Common myeloid progenitor, CD34-positive (primary cell): ENCODE measurements at regions of chr1 and their contacts with region 1.

Region 1: GRCh38 chr1:169676001-169676400 is 35.4 kb downstream of the SELL start:
- DNase-seq: peak in 2 of 3 donors; percentile 37 to 41
- H3K4me3 ChIP-seq: peak overlapping the region in 2 of 7 experiments; percentile 23 to 53
- H3K27ac ChIP-seq: no peak overlapping the region
- H3K4me1 ChIP-seq: peaks cover 15 to 35% (median 23%) of the 10 kb centered on the region in 4 experiments
- H3K27me3 ChIP-seq: no peaks in the 10 kb centered on the region

Region 2: GRCh38 chr1:169689395-169689794 is 13.4 kb after region 1 on chr1:
- CTCF ChIA-PET with region 1: interaction called, 13 read pairs
- POLR2A ChIA-PET with region 1: interaction called, 3 read pairs
- DNase-seq: no peak
- H3K4me3 ChIP-seq: no peak overlapping the region
- H3K27ac ChIP-seq: no peak overlapping the region
- H3K4me1 ChIP-seq: peaks cover 21 to 57% (median 35%) of the 10 kb centered on the region in 4 experiments
- H3K27me3 ChIP-seq: no peaks in the 10 kb centered on the region